Activated CD4-positive, alpha-beta T cell treated with anti-CD3 and anti-CD28 coated beads for 36 hours (primary cell): ENCODE measurements at regions of chrX and their contacts with region 1.

Region 1: DNA sequence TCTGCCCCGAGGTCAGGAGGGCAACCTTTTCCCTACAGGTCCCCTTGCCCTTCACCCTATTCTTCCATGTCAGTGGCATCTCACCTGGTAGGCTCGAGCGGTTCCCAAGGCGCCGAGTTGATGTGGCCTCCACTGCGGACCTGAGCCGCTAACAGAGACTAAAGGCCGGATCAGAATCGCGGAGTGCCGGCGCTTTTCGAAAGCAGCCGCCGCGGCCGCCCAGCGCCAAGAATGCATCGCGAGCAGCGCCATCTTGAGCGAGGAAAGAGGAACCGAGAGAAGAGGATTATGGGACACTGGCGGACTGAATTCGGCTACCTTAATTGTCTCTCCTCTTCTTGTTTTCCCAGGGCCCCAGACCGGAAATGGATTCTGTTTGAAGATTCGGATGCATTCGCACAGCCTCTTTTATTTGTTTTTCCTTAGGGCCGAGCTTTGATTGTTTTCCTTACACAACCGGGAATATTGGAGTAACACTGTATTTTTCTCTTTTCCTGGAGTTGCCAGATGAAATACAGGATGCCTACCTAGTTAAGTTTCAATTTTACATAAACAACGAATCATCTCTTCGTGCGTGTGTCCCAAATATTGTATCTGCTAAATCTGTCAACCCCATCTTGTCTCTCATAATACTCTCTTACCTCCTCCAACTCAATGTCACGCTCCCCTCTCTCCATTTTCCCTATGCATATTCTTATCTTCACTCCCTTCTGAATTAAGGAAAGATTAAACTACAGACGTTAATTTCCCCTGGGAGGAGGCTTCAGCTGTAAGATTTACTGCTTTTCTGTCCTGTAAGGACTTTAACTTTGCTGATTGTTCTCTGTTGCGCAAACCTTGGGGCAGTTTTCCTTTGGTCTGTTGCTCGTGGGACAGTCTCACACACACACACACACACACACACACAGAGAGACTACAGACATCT is at the start of gene ABCB7:
- DNase-seq: peak; percentile 72
- ATAC-seq: peak; percentile 84
- H3K4me3 Mint-ChIP-seq: peak within 1 kb of the TSS; percentile 83
- H3K27ac Mint-ChIP-seq: peak within 1 kb of the TSS; percentile 98
- H3K4me1 Mint-ChIP-seq: peaks cover 48% of the 10 kb centered on the region
- H3K27me3 Mint-ChIP-seq: no peaks in the 10 kb centered on the region
- total RNA-seq, gene ABCB7: 52.6 to 54.5 TPM

Region 2: GRCh38 chrX:73943693-73944562 is 1212.4 kb before region 1 on chrX:
- CTCF ChIA-PET with region 1: no interaction called
- POLR2A ChIA-PET with region 1: no interaction called
- intact Hi-C with region 1: loop called in 1 of 2 experiments (anchors 10 kb)
- DNase-seq: peak; percentile 91
- ATAC-seq: peak; percentile 99
- H3K4me3 Mint-ChIP-seq: peak overlapping the region; percentile 89
- H3K27ac Mint-ChIP-seq: peak overlapping the region; percentile 96
- H3K4me1 Mint-ChIP-seq: peaks cover 15% of the 10 kb centered on the region
- H3K27me3 Mint-ChIP-seq: no peaks in the 10 kb centered on the region

Region 3: GRCh38 chrX:74924449-74925225 is 231.6 kb before region 1 on chrX:
- CTCF ChIA-PET with region 1: no interaction called
- POLR2A ChIA-PET with region 1: no interaction called
- intact Hi-C with region 1: loop called in 1 of 2 experiments (anchors 1 kb)
- DNase-seq: peak; percentile 60
- ATAC-seq: peak; percentile 72
- H3K4me3 Mint-ChIP-seq: peak overlapping the region; percentile 70
- H3K27ac Mint-ChIP-seq: peak overlapping the region; percentile 40
- H3K4me1 Mint-ChIP-seq: peaks cover 6% of the 10 kb centered on the region
- H3K27me3 Mint-ChIP-seq: peaks cover 15% of the 10 kb centered on the region

Region 4: DNA sequence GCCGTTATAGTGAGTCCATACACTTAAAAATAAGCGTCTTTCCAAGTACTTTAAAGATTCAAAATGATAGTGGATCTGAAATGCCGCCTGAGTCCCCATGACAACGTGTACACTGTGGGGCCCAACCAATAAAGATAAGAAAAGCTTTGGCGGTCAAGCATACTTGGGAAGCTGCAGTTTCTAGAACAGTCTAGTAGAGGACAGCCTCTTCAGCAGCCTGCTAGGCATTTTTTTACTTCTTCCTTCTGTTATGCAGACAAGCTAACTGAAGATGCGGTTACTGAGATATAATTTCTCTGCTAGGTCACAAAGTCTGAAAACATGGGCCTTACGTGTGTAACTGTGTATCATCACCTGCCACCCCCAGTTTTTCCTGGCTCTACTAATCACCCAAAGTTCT is 117.2 kb after region 1 on chrX:
- CTCF ChIA-PET with region 1: no interaction called
- POLR2A ChIA-PET with region 1: interaction called, 4 read pairs
- intact Hi-C with region 1: loop called (anchors 1 to 5 kb)
- DNase-seq: no peak
- ATAC-seq: no peak
- H3K4me3 Mint-ChIP-seq: peak overlapping the region; percentile 95
- H3K27ac Mint-ChIP-seq: peak overlapping the region; percentile 97
- H3K4me1 Mint-ChIP-seq: peaks cover 26% of the 10 kb centered on the region
- H3K27me3 Mint-ChIP-seq: no peaks in the 10 kb centered on the region

Region 5: GRCh38 chrX:76172325-76172893 is 1016.1 kb after region 1 on chrX:
- CTCF ChIA-PET with region 1: no interaction called
- POLR2A ChIA-PET with region 1: no interaction called
- intact Hi-C with region 1: loop called in 1 of 2 experiments (anchors 2 kb)
- DNase-seq: no peak
- ATAC-seq: peak; percentile 70
- H3K4me3 Mint-ChIP-seq: peak overlapping the region; percentile 87
- H3K27ac Mint-ChIP-seq: peak overlapping the region; percentile 97
- H3K4me1 Mint-ChIP-seq: peaks cover 49% of the 10 kb centered on the region
- H3K27me3 Mint-ChIP-seq: no peaks in the 10 kb centered on the region